ENCODE measurements at regions of chr10 and their contacts with region 1.

Region 1: GRCh38 chr10:1754506-1755153 is 17.3 kb upstream of the ADARB2 start:
- DNase-seq: peak; percentile 36
- ATAC-seq: peak; percentile 73
- H3K4me3 Mint-ChIP-seq: no peak overlapping the region
- H3K27ac Mint-ChIP-seq: no peak overlapping the region; the same call in 1 of the 2 replicates
- H3K4me1 Mint-ChIP-seq: peaks cover 22% of the 10 kb centered on the region
- H3K27me3 Mint-ChIP-seq: peaks cover 26% of the 10 kb centered on the region
- CTCF ChIP-seq: no peak

Region 2: GRCh38 chr10:1737222-1738061 is 17.2 kb before region 1 on chr10 and contains the start of gene ADARB2:
- CTCF ChIA-PET with region 1: interaction called, 20 read pairs
- POLR2A ChIA-PET with region 1: interaction called, 3 read pairs
- DNase-seq: peak; percentile 83
- ATAC-seq: peak; percentile 88
- H3K4me3 Mint-ChIP-seq: peak within 1 kb of the TSS; percentile 79
- H3K27ac Mint-ChIP-seq: no peak within 1 kb of the TSS
- H3K4me1 Mint-ChIP-seq: peaks cover 30% of the 10 kb centered on the region
- H3K27me3 Mint-ChIP-seq: peaks cover 65% of the 10 kb centered on the region
- CTCF ChIP-seq: no peak
- total RNA-seq, gene ADARB2: 3.3 to 4.9 TPM (median 3.7 TPM) in 3 replicates

Region 3: DNA sequence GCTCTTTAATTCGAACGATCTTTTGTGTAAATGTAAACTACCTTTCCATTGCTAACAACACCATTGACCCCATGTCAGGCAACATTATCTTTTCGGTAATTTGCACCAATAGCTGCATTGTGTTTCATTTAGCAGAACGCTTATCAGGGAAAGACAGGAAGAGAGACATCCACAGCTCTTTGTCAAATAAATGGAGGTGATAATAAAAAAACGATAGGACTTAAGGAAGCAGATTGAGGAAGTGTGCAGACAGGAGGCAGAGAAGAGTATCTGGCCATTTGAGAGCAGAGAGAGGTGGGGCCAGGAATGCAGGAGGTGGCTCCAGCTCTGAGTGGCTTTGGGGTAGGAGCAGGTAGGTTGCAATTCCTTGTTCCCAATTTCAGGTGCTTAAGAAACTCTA is 20.2 kb after region 1 on chr10:
- CTCF ChIA-PET with region 1: interaction called, 12 read pairs
- POLR2A ChIA-PET with region 1: no interaction called
- DNase-seq: peak; percentile 35
- ATAC-seq: peak; percentile 97
- H3K4me3 Mint-ChIP-seq: peak overlapping the region; percentile 45
- H3K27ac Mint-ChIP-seq: peak overlapping the region; percentile 57
- H3K4me1 Mint-ChIP-seq: peaks cover 49% of the 10 kb centered on the region
- H3K27me3 Mint-ChIP-seq: peaks cover 40% of the 10 kb centered on the region
- CTCF ChIP-seq: no peak

Measured in WTC11 (cell line).